Endothelial cell of umbilical vein (primary cell): ENCODE measurements at regions of chr17 and their contacts with region 1.

Region 1: DNA sequence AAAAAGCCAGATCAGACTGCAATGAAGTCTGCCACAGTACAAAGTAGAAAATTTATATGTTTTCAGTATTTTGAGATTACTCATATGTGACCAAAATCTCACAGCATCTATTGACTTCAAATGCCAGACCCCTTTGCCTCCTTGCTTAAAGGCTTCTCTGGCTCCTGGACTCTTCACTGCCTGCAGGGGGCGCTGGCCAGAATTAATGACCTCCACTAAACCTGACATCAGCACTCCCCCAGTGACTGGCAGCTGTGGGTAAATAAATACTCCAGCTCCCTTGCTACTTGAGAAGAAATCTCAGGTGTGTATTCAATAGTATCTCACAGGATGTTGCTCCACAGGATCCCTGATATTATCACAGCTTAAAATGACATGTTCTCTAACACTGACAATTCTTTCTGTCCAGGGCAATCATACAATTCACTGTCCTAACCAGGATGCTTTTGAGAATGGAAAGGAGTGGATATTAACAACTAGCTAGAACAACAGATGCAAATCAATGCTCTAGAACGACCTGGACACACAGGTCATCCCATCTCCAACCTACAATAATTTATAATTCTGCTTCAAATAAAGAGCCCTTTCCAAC is 4.0 kb downstream of the BECN1 start:
- DNase-seq: peak; percentile 60
- H3K4me3 ChIP-seq: no peak overlapping the region
- H3K27ac ChIP-seq: no peak overlapping the region
- H3K4me1 ChIP-seq: peaks cover 14% of the 10 kb centered on the region
- H3K27me3 ChIP-seq: no peaks in the 10 kb centered on the region
- CTCF ChIP-seq: peak; percentile 81 to 90
- POLR2A ChIP-seq: no peak

Region 2: GRCh38 chr17:42720996-42721583 is 99.0 kb before region 1 on chr17:
- CTCF ChIA-PET with region 1: interaction called, 25 read pairs
- POLR2A ChIA-PET with region 1: no interaction called
- dilution Hi-C with region 1: no loop called
- intact Hi-C with region 1: loop called (anchors 1 kb)
- DNase-seq: peak; percentile 73
- H3K4me3 ChIP-seq: no peak overlapping the region
- H3K27ac ChIP-seq: no peak overlapping the region
- H3K4me1 ChIP-seq: no peaks in the 10 kb centered on the region
- H3K27me3 ChIP-seq: no peaks in the 10 kb centered on the region
- CTCF ChIP-seq: peak; percentile 47 to 52
- POLR2A ChIP-seq: no peak

Region 3: DNA sequence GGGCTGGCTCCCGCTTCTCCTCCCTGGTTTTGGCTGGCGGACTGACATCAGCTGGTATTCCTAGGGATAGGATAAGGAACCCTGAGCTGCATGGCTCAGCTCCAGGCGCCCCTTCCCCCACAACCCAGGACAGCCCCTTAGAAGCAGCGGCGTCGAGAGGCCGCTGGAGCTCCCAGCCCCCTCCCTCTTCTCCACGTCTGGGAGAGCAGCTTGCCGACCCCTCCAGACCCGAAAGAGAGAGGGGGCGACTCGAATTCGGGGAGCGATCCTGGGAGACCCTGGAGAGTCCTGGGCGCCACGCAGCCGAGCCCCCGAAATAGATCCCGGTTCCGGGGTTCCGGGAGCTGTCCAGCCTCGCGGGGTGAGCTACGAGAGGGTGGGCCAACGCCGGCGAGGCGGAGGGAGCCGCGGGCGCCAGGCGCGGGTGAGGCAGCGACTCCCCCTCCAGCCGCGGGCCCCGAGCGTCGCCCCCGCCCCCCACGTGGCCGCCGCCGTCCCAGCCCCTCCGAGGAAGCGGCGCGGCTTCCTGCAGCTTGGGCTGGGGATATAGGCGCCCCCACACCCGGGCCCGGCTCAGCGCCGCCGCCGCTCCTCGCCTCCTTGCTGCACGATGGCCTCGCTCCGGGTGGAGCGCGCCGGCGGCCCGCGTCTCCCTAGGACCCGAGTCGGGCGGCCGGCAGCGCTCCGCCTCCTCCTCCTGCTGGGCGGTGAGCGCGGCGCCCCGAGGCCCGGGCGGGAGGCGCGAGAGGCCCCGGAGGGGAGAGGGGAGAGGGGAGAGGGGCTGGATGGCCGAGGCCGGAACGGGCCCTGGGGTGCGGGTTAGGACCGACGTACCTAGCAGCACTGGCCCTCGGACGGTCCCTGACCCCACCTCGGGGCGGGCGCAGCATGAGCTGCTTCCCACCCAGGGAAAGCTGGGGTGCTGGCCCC is 59.1 kb before region 1 on chr17 and contains the start of gene RAMP2:
- CTCF ChIA-PET with region 1: interaction called, 32 read pairs
- POLR2A ChIA-PET with region 1: interaction called, 4 read pairs
- dilution Hi-C with region 1: no loop called
- intact Hi-C with region 1: loop called (anchors 1 kb)
- DNase-seq: peak; percentile 28
- H3K4me3 ChIP-seq: peak within 1 kb of the TSS; percentile 10 to 67 (median 14)
- H3K27ac ChIP-seq: no peak within 1 kb of the TSS
- H3K4me1 ChIP-seq: peaks cover 39% of the 10 kb centered on the region
- H3K27me3 ChIP-seq: peaks cover 0 to 3% of the 10 kb centered on the region in 2 experiments
- CTCF ChIP-seq: no peak
- POLR2A ChIP-seq: no peak
- total RNA-seq, gene RAMP2: 71.0 and 106 TPM in 2 replicates

Region 4: GRCh38 chr17:42779936-42780850 is 39.8 kb before region 1 on chr17 and contains the start of gene WNK4:
- CTCF ChIA-PET with region 1: interaction called, 15 read pairs
- POLR2A ChIA-PET with region 1: no interaction called
- dilution Hi-C with region 1: no loop called
- intact Hi-C with region 1: no loop called
- DNase-seq: peak; percentile 23
- H3K4me3 ChIP-seq: peak within 1 kb of the TSS in 2 of 3 experiments; percentile 18 to 48
- H3K27ac ChIP-seq: no peak within 1 kb of the TSS
- H3K4me1 ChIP-seq: peaks cover 43% of the 10 kb centered on the region
- H3K27me3 ChIP-seq: peaks cover 7 to 9% of the 10 kb centered on the region in 2 experiments
- CTCF ChIP-seq: no peak
- POLR2A ChIP-seq: peak; percentile 55
- total RNA-seq, gene WNK4: 1.9 TPM in 2 replicates

Region 5: DNA sequence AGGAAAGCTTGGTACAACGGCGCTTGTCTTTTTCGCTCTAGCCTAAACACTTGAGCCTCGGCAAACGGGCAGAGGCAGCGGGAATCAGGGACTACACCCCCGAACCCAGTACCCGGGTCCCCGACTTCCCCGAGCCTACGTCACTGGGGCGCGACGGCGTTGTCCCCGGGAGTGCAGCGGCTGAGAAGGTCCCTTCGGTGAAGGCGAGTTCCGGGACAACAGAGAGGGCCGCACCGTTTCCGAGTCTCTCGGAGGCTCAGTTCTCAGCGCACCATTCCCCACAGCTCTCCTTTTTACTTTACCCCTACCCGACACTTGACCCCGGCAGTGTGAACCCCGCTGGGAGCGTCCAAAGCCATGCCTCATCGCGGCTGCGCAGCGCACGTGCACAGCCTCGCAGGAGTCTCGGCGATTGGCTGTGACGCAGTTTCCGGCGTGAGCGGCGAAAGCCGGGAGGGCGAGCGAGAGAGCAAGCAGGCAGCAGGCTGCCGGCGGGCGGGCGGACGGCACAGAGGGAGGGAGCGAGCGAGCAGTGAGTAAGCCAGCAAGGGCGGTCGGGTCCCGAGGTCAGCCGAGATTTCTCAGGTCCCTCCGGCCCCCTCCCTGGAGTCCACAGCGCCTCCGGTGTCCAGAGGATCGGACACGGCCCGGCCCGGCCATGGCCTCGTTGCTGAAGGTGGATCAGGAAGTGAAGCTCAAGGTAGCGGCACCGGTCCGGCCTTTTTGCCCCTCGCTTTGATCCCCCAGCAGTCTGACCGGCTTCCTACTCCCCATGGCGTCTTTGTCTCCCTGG is 13.1 kb after region 1 on chr17 and contains the start of gene PSME3:
- CTCF ChIA-PET with region 1: interaction called, 18 read pairs
- POLR2A ChIA-PET with region 1: no interaction called
- dilution Hi-C with region 1: no loop called
- intact Hi-C with region 1: no loop called
- DNase-seq: peak; percentile 91
- H3K4me3 ChIP-seq: peak within 1 kb of the TSS; percentile 58 to 81 (median 80)
- H3K27ac ChIP-seq: peak within 1 kb of the TSS; percentile 71
- H3K4me1 ChIP-seq: peaks cover 17% of the 10 kb centered on the region
- H3K27me3 ChIP-seq: peaks cover 0 to 4% of the 10 kb centered on the region in 2 experiments
- CTCF ChIP-seq: no peak
- POLR2A ChIP-seq: peak; percentile 91
- total RNA-seq, gene PSME3: 126 and 133 TPM in 2 replicates

Region 6: GRCh38 chr17:42937712-42938596 is 117.9 kb after region 1 on chr17:
- CTCF ChIA-PET with region 1: interaction called, 4 read pairs
- POLR2A ChIA-PET with region 1: no interaction called
- dilution Hi-C with region 1: no loop called
- intact Hi-C with region 1: loop called (anchors 5 kb)
- DNase-seq: peak; percentile 65
- H3K4me3 ChIP-seq: no peak overlapping the region
- H3K27ac ChIP-seq: no peak overlapping the region
- H3K4me1 ChIP-seq: no peaks in the 10 kb centered on the region
- H3K27me3 ChIP-seq: peaks cover 0 to 2% of the 10 kb centered on the region in 2 experiments
- CTCF ChIP-seq: peak; percentile 62 to 69
- POLR2A ChIP-seq: no peak

Region 7: GRCh38 chr17:42953669-42954068 is 133.6 kb after region 1 on chr17:
- CTCF ChIA-PET with region 1: no interaction called
- POLR2A ChIA-PET with region 1: no interaction called
- dilution Hi-C with region 1: no loop called
- intact Hi-C with region 1: no loop called
- DNase-seq: no peak
- H3K4me3 ChIP-seq: no peak overlapping the region
- H3K27ac ChIP-seq: no peak overlapping the region
- H3K4me1 ChIP-seq: no peaks in the 10 kb centered on the region
- H3K27me3 ChIP-seq: no peaks in the 10 kb centered on the region
- CTCF ChIP-seq: no peak
- POLR2A ChIP-seq: no peak